ENCODE measurements at regions of chr16 and their contacts with region 1.

Region 1: GRCh38 chr16:10876799-10877341 is at the start of gene CIITA:
- DNase-seq: peak; percentile 97
- H3K4me3 ChIP-seq: peak within 1 kb of the TSS; percentile 87
- H3K27ac ChIP-seq: peak within 1 kb of the TSS; percentile 94
- H3K4me1 ChIP-seq: peaks cover 60% of the 10 kb centered on the region
- CTCF ChIP-seq: no peak
- total RNA-seq, gene CIITA: 56.1 and 68.7 TPM in 2 replicates

Region 2: DNA sequence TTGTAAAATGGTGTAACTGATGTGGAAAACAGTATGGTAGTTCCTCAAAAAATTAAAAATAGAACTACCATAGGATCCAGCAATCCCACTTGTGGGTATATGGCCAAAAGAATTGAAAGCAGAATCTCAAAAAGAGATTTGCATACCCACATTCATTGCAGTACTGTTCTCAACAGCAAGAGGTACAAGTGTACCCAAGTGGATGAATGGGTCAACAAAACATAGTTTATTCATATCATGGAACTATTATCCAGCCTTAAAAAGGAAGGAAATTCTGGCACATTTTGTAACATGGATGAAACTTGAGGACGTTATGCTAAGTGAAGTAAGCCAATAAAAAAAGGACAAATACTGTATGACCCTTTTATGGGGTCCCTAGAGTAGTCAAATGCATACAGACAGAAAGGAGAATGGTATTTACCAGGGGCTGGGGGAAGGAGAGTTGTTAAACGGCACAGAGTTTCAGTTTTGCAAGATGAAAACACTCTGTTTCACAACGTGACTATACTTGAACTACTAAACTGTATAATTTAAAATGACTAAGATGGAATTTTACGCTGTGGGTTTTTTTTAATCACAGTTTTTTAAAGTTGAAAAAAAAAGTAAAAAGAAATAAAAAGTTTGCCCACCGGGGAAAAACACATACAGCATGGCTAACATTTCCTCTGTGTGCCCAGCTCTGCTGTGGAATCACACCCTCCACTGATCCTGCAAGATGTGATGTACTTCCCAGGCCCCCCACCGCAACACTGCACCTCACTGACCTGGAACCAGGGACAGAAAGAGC is 64.4 kb before region 1 on chr16:
- CTCF ChIA-PET with region 1: no interaction called
- POLR2A ChIA-PET with region 1: interaction called, 4 read pairs
- intact Hi-C with region 1: loop called (anchors 5 kb)
- DNase-seq: peak; percentile 56
- H3K4me3 ChIP-seq: peak overlapping the region; percentile 32
- H3K27ac ChIP-seq: peak overlapping the region; percentile 55
- H3K4me1 ChIP-seq: peaks cover 49% of the 10 kb centered on the region
- CTCF ChIP-seq: peak; percentile 50

Region 3: GRCh38 chr16:10895053-10895946 is 18.4 kb after region 1 on chr16:
- CTCF ChIA-PET with region 1: interaction called, 28 read pairs
- POLR2A ChIA-PET with region 1: interaction called, 53 read pairs
- intact Hi-C with region 1: loop called (anchors 1 kb)
- DNase-seq: peak; percentile 52
- H3K4me3 ChIP-seq: no peak overlapping the region
- H3K27ac ChIP-seq: peak overlapping the region; percentile 50
- H3K4me1 ChIP-seq: peaks cover 71% of the 10 kb centered on the region
- CTCF ChIP-seq: no peak

Region 4: DNA sequence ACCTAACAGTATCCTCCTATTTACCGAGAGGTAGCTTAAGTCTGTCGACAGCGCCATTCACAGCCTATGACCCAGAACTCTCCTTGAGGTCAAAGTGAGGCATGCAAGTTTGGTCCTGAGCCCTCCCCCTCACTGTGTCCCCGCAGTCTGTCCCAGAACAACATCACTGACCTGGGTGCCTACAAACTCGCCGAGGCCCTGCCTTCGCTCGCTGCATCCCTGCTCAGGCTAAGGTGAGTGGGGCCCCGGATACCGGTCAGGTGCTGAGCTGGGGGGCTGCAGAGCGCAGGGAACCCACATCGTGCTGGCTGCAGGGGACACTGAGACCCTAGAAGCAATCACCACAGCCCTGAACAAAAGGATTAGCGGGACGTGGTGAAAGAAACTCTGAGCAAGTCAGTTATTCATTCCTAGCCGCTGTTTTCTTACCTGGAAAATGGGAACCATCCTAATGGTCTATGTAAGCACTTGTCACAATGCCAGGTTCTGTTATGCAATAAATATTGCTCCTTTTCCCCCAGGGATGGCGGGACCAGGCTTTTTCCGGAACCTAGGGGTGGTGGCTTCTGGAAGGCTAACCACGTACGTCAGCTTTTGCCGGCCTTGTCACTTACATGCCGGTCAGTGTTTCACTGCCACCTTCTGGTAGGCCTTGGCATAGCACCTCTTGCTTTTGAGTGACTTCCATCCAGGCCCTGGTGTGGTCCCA is 41.6 kb after region 1 on chr16:
- CTCF ChIA-PET with region 1: interaction called, 11 read pairs
- POLR2A ChIA-PET with region 1: interaction called, 5 read pairs
- intact Hi-C with region 1: loop called (anchors 1 kb)
- DNase-seq: peak; percentile 87
- H3K4me3 ChIP-seq: no peak overlapping the region
- H3K27ac ChIP-seq: no peak overlapping the region
- H3K4me1 ChIP-seq: peaks cover 6% of the 10 kb centered on the region
- CTCF ChIP-seq: peak; percentile 97

Region 5: DNA sequence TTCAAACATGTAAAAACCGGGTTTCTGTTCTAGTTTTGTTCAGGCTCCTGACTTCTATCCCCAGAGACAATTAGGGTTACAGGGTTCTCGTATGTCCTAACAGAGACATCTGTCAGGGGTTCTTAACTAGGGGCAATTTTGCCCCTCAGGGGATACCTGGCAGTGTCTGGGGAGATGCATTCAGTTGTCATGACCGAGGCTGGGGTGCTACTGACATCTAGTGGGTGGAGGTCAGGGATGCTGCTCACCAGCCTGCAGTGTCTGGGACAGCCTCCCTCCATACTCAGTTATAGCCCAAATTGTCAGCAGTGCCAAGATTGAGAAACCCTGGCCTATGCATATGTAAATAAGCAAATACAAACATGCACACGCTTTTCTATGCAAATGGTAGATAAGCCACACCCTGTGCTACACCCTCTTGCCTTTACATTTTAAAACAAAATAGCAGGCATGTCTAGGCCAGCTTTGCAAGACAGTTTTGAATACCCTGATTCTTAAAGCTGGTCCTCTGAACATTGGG is 104.9 kb after region 1 on chr16:
- CTCF ChIA-PET with region 1: no interaction called
- POLR2A ChIA-PET with region 1: no interaction called
- intact Hi-C with region 1: no loop called
- DNase-seq: peak; percentile 81
- H3K4me3 ChIP-seq: no peak overlapping the region
- H3K27ac ChIP-seq: peak overlapping the region; percentile 43
- H3K4me1 ChIP-seq: peaks cover 25% of the 10 kb centered on the region
- CTCF ChIP-seq: peak; percentile 94

Region 6: GRCh38 chr16:11016993-11017392 is 140.1 kb after region 1 on chr16:
- CTCF ChIA-PET with region 1: no interaction called
- POLR2A ChIA-PET with region 1: no interaction called
- intact Hi-C with region 1: no loop called
- DNase-seq: no peak
- H3K4me3 ChIP-seq: no peak overlapping the region
- H3K27ac ChIP-seq: no peak overlapping the region
- H3K4me1 ChIP-seq: no peaks in the 10 kb centered on the region
- CTCF ChIP-seq: no peak